ENCODE measurements at regions of chr12 and their contacts with region 1.

Region 1: DNA sequence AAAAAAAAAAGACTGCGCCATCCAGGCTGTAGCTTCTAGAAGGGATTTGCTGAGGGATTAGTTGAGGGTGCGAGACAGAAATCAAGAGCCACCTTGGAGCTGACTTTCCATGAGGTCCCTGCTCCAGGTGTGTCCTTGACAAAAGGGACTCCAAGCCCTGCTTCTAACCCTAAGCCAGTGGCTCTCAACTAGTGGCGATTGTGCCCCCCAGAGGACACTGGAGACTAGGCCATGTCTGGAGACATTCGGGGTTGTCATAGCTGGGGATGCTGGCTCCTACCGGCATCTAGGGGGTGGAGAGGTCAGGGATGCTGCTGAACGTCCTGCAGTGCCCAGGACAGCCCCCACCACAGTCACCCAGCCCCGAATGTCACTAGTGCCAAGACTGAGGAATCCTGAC is 40.6 kb downstream of the SPRING1 start:
- DNase-seq: no peak
- H3K4me3 ChIP-seq: no peak overlapping the region
- H3K27ac ChIP-seq: peak overlapping the region in 1 of 4 donors; percentile 30
- H3K4me1 ChIP-seq: peaks cover 0 to 29% (median 22%) of the 10 kb centered on the region in 4 donors
- H3K27me3 ChIP-seq: peaks cover 21% of the 10 kb centered on the region
- CTCF ChIP-seq: no peak
- EP300 ChIP-seq: no peak
- POLR2A ChIP-seq: no peak

Region 2: GRCh38 chr12:116306506-116306905 is 390.8 kb before region 1 on chr12:
- in situ Hi-C with region 1: no loop called
- intact Hi-C with region 1: loop called (anchors 5 kb)
- DNase-seq: no peak
- H3K4me3 ChIP-seq: no peak overlapping the region
- H3K27ac ChIP-seq: no peak overlapping the region
- H3K4me1 ChIP-seq: no peaks in the 10 kb centered on the region
- H3K27me3 ChIP-seq: no peaks in the 10 kb centered on the region
- CTCF ChIP-seq: no peak
- EP300 ChIP-seq: no peak
- POLR2A ChIP-seq: no peak

Region 3: GRCh38 chr12:116982791-116983411 is 285.6 kb after region 1 on chr12:
- in situ Hi-C with region 1: no loop called
- intact Hi-C with region 1: no loop called
- DNase-seq: no peak
- H3K4me3 ChIP-seq: no peak overlapping the region
- H3K27ac ChIP-seq: peak overlapping the region; percentile 26 to 53 (median 44)
- H3K4me1 ChIP-seq: no peaks in the 10 kb centered on the region
- H3K27me3 ChIP-seq: no peaks in the 10 kb centered on the region
- CTCF ChIP-seq: no peak
- EP300 ChIP-seq: no peak
- POLR2A ChIP-seq: no peak

Region 4: GRCh38 chr12:117090816-117091711 is 393.8 kb after region 1 on chr12:
- in situ Hi-C with region 1: no loop called
- intact Hi-C with region 1: no loop called
- DNase-seq: no peak
- H3K4me3 ChIP-seq: no peak overlapping the region
- H3K27ac ChIP-seq: no peak overlapping the region
- H3K4me1 ChIP-seq: no peaks in the 10 kb centered on the region
- H3K27me3 ChIP-seq: peaks cover 6% of the 10 kb centered on the region
- CTCF ChIP-seq: no peak
- EP300 ChIP-seq: no peak
- POLR2A ChIP-seq: no peak